PC-9 (cell line): ENCODE measurements at regions of chr18 and their contacts with region 1.

Region 1: DNA sequence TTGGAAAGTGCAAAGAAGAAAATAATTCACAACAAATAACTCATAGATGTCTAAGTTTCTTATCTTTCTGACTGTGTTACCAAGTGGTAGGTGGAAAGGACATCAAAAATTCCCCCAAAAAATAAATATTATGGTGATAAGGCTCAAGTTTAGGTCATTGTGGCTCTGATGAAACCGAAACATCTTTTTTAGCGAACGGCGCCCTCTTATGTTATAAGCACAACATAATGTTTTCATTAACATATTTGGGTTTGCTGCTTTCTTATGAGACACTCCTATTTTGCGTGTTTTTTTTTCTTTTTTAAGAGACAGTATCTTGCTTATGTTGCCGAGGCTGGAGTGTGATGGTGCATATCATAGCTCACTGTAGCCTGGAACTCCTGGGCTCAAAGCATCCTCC is 38.6 kb upstream of the SLC35G4 start:
- DNase-seq: no peak
- H3K4me3 ChIP-seq: no peak overlapping the region
- H3K27ac ChIP-seq: no peak overlapping the region
- H3K4me1 ChIP-seq: no peaks in the 10 kb centered on the region
- H3K27me3 ChIP-seq: peaks cover 76% of the 10 kb centered on the region
- CTCF ChIP-seq: no peak; the same call in 1 of the 2 replicates

Region 2: GRCh38 chr18:11074889-11075288 is 495.9 kb before region 1 on chr18:
- CTCF ChIA-PET with region 1: no interaction called
- POLR2A ChIA-PET with region 1: no interaction called
- intact Hi-C with region 1: no loop called
- DNase-seq: no peak
- H3K4me3 ChIP-seq: no peak overlapping the region
- H3K27ac ChIP-seq: no peak overlapping the region
- H3K4me1 ChIP-seq: no peaks in the 10 kb centered on the region
- H3K27me3 ChIP-seq: peaks cover 70% of the 10 kb centered on the region
- CTCF ChIP-seq: no peak

Region 3: GRCh38 chr18:11178951-11179549 is 391.7 kb before region 1 on chr18:
- CTCF ChIA-PET with region 1: no interaction called
- POLR2A ChIA-PET with region 1: no interaction called
- intact Hi-C with region 1: loop called (anchors 10 kb)
- DNase-seq: no peak
- H3K4me3 ChIP-seq: no peak overlapping the region
- H3K27ac ChIP-seq: no peak overlapping the region
- H3K4me1 ChIP-seq: no peaks in the 10 kb centered on the region
- H3K27me3 ChIP-seq: peaks cover 34% of the 10 kb centered on the region
- CTCF ChIP-seq: no peak

Region 4: DNA sequence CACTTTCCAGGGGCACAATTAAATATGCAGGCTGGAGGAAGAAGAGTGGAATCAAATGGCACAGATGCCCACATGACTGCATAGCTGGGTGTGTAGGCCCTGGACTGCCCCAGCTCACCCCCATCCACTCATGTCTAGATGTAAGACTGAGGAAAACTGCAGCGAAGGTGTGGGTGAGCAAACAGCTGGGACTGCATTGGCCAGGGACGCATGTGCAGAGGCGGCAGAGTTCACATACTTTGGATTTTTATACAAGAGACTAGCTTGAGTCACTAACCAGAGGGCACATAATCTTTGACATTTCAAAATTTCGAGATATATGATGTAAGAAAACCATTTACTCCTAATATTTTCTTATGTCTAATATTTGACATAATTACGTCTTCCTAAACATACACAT is 1027.0 kb after region 1 on chr18:
- CTCF ChIA-PET with region 1: no interaction called
- POLR2A ChIA-PET with region 1: no interaction called
- intact Hi-C with region 1: no loop called
- DNase-seq: peak; percentile 86 to 92
- H3K4me3 ChIP-seq: no peak overlapping the region
- H3K27ac ChIP-seq: peak overlapping the region; percentile 90
- H3K4me1 ChIP-seq: peaks cover 54% of the 10 kb centered on the region
- H3K27me3 ChIP-seq: no peaks in the 10 kb centered on the region
- CTCF ChIP-seq: no peak